Activated CD4-positive, alpha-beta T cell treated with anti-CD3 and anti-CD28 coated beads for 36 hours (primary cell): ENCODE measurements at regions of chr14 and their contacts with region 1.

Region 1: DNA sequence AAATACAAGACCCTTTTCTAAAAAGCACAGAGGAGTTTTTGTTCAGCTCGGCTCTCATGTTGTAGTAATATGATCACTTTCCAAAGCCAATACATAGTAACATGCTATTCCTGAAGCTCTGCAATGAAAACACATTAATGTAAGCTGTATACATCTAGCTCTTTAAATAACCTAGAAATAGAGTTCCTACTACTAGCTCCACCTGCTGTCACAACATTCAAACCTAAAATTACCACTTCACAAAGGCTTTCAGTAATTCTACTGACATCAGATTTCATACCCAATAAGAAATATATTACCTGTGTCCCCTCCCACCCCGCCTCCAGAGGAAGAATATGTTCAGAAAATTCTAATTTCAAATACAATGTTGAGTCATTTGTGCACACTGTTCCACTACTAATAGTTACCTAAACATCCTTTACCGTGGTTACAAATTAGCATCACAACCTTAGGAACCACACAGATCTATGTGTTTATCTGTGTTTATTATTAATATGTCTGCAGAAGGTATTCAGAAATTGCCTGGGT is 17.8 kb downstream of the EFCAB11 start:
- DNase-seq: no peak
- ATAC-seq: no peak
- H3K4me3 Mint-ChIP-seq: no peak overlapping the region
- H3K27ac Mint-ChIP-seq: no peak overlapping the region
- H3K4me1 Mint-ChIP-seq: peaks cover under 1% of the 10 kb centered on the region
- H3K27me3 Mint-ChIP-seq: no peaks in the 10 kb centered on the region

Region 2: DNA sequence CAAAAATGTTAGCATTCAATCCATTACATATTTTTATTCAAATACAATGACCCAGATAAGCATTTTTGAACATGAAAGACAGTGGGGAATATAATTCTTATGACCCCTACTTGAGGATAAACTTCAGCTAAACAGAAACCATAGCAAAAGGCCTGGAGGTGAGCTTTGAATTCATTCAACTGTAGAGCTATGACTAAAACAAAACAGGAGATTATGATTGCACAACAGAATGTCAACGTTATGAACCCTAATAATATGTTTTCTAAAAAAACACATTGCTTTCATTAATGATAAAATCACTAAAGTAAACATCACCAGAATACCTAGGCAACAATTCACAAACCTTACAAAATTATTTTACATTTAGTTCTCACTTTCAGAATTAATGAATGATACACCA is 10.0 kb before region 1 on chr14:
- CTCF ChIA-PET with region 1: interaction called, 14 read pairs
- POLR2A ChIA-PET with region 1: no interaction called
- intact Hi-C with region 1: no loop called
- DNase-seq: no peak
- ATAC-seq: no peak
- H3K4me3 Mint-ChIP-seq: no peak overlapping the region
- H3K27ac Mint-ChIP-seq: no peak overlapping the region
- H3K4me1 Mint-ChIP-seq: no peaks in the 10 kb centered on the region
- H3K27me3 Mint-ChIP-seq: no peaks in the 10 kb centered on the region

Region 3: DNA sequence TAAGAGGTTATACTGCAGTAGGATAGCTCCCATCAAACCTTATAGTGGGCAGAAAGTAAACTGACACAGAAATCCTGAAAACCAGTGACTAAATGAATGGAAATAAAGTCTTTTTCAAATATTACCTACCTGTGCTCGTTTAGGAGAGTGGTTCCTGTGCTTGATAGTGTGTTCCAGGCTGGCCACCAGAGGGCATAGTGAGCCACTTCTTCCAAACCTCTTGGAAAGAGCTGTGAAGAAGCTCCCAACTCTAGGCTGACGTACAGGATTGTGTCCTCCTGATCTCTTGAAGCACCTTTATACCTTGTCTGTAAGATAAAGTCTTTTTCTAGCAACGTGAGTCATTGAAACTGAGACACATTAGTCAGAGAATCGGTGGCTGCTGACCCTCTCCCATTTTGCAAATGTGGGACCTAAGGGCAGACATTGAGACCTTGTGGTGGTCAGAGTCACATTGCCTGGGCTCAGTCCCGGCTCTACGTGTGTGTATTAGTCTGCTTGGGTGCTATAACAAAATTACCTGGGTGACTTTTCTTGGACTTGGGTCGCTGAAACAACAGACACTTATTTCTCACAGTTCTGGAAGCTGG is 36.6 kb after region 1 on chr14:
- CTCF ChIA-PET with region 1: interaction called, 19 read pairs
- POLR2A ChIA-PET with region 1: no interaction called
- intact Hi-C with region 1: loop called in 1 of 2 experiments (anchors 1 kb)
- DNase-seq: peak; percentile 70
- ATAC-seq: peak; percentile 63
- H3K4me3 Mint-ChIP-seq: no peak overlapping the region
- H3K27ac Mint-ChIP-seq: no peak overlapping the region
- H3K4me1 Mint-ChIP-seq: no peaks in the 10 kb centered on the region
- H3K27me3 Mint-ChIP-seq: no peaks in the 10 kb centered on the region

Region 4: GRCh38 chr14:90024910-90025309 is 88.2 kb after region 1 on chr14:
- CTCF ChIA-PET with region 1: no interaction called
- POLR2A ChIA-PET with region 1: no interaction called
- intact Hi-C with region 1: no loop called
- DNase-seq: no peak
- ATAC-seq: no peak
- H3K4me3 Mint-ChIP-seq: no peak overlapping the region
- H3K27ac Mint-ChIP-seq: no peak overlapping the region
- H3K4me1 Mint-ChIP-seq: peaks cover 3% of the 10 kb centered on the region
- H3K27me3 Mint-ChIP-seq: no peaks in the 10 kb centered on the region

Region 5: DNA sequence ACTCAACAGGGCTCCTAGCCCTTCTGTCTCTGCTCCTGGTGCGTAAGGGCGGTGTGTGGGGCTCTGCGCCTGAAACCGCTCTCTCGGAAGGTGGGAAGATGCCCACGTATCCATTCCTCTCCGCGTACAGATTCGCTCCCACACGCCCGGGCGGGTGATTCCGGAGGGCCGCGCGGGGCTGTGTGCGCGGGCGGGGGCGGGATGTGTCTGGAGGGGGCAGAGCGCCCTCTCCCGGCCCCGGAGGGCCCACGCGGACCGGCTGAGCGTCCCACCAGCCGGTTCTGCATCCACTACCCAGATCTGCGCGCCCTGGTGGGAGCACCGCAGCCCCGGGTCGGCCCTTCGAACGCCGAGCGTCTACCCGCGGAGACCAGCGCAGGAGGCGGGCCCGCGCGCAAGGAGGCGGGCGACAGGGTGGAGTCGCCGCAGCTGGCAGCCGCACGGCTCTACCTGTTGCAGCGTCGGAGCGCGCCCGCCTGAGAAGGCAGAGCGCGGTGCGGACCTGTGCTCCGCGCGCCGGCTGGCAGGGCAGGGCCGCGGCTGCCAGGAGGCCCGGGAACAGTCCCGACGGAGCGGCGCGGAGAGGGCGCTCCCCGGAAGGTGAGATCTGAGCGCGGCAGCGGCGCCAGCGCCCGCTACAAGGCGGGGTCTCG is 123.7 kb after region 1 on chr14:
- CTCF ChIA-PET with region 1: interaction called, 4 read pairs
- POLR2A ChIA-PET with region 1: no interaction called
- intact Hi-C with region 1: loop called in 1 of 2 experiments (anchors 1 kb)
- DNase-seq: peak; percentile 77
- ATAC-seq: peak; percentile 86
- H3K4me3 Mint-ChIP-seq: peak overlapping the region; percentile 64
- H3K27ac Mint-ChIP-seq: no peak overlapping the region
- H3K4me1 Mint-ChIP-seq: peaks cover 24% of the 10 kb centered on the region
- H3K27me3 Mint-ChIP-seq: peaks cover 64% of the 10 kb centered on the region

Region 6: GRCh38 chr14:90235179-90235976 is 298.7 kb after region 1 on chr14:
- CTCF ChIA-PET with region 1: interaction called, 13 read pairs
- POLR2A ChIA-PET with region 1: no interaction called
- intact Hi-C with region 1: loop called (anchors 1 kb)
- DNase-seq: peak; percentile 82
- ATAC-seq: peak; percentile 61
- H3K4me3 Mint-ChIP-seq: no peak overlapping the region
- H3K27ac Mint-ChIP-seq: no peak overlapping the region
- H3K4me1 Mint-ChIP-seq: no peaks in the 10 kb centered on the region
- H3K27me3 Mint-ChIP-seq: peaks cover 7% of the 10 kb centered on the region